A549 (cell line): ENCODE measurements at regions of chr11 and their contacts with region 1.

Region 1: GRCh38 chr11:4065601-4066377 is 28.8 kb upstream of the RRM1 start:
- DNase-seq: no peak
- ATAC-seq: no peak
- H3K4me3 ChIP-seq: no peak overlapping the region
- H3K27ac ChIP-seq: no peak overlapping the region
- H3K4me1 ChIP-seq: no peaks in the 10 kb centered on the region
- CTCF ChIP-seq: no peak
- EP300 ChIP-seq: no peak
- POLR2A ChIP-seq: no peak
- RAD21 ChIP-seq: no peak

Region 2: DNA sequence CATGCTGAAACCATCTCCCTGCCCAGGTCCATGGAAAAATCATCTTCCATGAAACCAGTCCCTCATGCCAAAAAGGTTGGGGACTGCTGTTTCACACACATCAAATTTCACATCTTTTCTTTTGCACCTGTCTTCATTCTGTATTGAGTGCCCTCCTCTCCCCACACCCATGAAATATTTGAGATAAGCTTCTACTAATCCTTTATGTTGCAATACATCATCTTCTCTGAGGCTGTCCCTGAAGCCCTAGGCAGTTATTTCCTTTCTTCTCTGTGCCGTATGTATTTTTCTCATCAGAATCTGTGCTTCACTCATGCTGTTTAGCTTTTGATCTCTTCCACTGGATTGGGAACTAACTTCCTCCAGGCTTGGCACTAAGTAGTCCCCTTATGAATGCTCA is 11.1 kb before region 1 on chr11:
- CTCF ChIA-PET with region 1: interaction called, 16 read pairs
- POLR2A ChIA-PET with region 1: no interaction called
- DNase-seq: no peak
- ATAC-seq: no peak
- H3K4me3 ChIP-seq: no peak overlapping the region
- H3K27ac ChIP-seq: no peak overlapping the region
- H3K4me1 ChIP-seq: no peaks in the 10 kb centered on the region
- CTCF ChIP-seq: no peak
- EP300 ChIP-seq: no peak
- POLR2A ChIP-seq: no peak
- RAD21 ChIP-seq: no peak

Region 3: DNA sequence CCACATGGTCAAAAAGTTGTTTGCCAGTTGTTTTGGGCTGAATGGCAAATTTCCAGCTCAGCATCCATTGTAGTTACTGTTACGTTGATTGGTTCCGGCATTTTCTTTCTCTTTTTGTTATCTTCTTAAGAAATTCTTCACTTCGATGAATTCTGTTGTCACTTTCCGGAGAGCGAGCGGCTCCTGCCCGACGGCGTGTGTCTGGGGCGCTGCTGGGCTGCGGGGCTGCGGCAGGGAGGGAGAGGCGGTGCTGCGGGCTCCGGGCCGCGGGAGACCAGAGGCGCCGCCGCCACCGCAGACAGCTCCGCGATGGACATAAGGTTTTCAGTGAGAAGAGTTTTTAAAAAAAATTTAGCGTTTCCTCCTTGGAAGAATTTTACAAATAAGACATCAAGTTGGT is 146.2 kb after region 1 on chr11:
- CTCF ChIA-PET with region 1: no interaction called
- POLR2A ChIA-PET with region 1: no interaction called
- DNase-seq: no peak
- ATAC-seq: no peak
- H3K4me3 ChIP-seq: no peak overlapping the region
- H3K27ac ChIP-seq: no peak overlapping the region
- H3K4me1 ChIP-seq: no peaks in the 10 kb centered on the region
- CTCF ChIP-seq: no peak
- EP300 ChIP-seq: no peak
- POLR2A ChIP-seq: no peak
- RAD21 ChIP-seq: no peak